ENCODE measurements at regions of chr1 and their contacts with region 1.

Region 1: GRCh38 chr1:161201828-161202725 is at the start of gene NDUFS2:
- DNase-seq: peak; percentile 71 to 98 (median 92)
- ATAC-seq: peak; percentile 99
- H3K4me3 ChIP-seq: peak within 1 kb of the TSS; percentile 78
- H3K4me3 Mint-ChIP-seq: peak within 1 kb of the TSS; percentile 90 to 98 (median 95)
- H3K27ac ChIP-seq: peak within 1 kb of the TSS; percentile 97
- H3K27ac Mint-ChIP-seq: peak within 1 kb of the TSS; percentile 96 to 99 (median 98)
- H3K4me1 ChIP-seq: peaks cover 35 to 60% of the 10 kb centered on the region in 2 donors
- H3K4me1 Mint-ChIP-seq: peaks cover 36 to 83% (median 66%) of the 10 kb centered on the region in 7 donors
- H3K27me3 ChIP-seq: no peaks in the 10 kb centered on the region
- H3K27me3 Mint-ChIP-seq: no peaks in the 10 kb centered on the region
- total RNA-seq, gene NDUFS2: 64.1 to 131 (median 85.3) TPM

Region 2: DNA sequence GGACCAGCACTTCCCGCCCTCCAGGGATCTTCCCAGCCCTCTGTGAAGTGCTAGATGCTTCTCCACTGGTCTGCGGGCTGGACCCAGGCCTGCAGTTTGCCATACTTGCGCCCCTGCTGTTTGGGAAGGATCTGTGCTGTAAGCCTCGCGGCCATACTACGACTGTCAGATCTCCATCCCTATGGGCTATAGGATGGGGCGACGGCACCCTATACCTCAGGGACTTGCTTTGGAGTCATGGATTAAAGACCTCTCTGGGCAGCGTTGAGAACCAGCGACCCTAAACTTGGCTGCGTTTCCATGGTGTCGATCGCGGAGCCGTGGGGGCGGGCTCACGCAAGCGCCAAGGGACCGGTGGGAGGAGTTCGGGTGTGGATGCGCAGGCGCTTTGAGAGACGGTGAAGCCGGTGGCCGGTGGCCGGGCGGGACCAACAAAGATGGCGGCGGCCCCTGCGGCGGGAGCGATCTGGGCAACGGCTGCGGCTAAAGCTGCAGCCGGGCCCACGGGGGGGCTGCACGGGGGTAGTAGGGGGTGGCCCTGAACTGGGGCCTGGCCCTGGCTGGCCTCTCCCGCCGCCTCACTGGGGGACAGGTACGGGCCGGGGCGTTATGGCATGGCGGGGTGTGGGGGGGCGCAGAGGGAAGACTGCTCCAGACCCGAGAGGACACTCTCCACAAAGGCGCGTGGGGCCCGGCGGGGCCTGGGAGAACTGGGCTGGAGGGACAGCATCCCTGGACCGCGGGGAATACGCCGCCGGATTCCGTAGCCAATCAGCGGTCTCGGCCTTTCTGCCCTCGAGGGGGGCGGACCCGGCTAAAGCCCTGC is 42.8 kb before region 1 on chr1 and contains the start of gene USP21:
- CTCF ChIA-PET with region 1: interaction called, 4 read pairs
- POLR2A ChIA-PET with region 1: interaction called, 69 read pairs
- intact Hi-C with region 1: loop called (anchors 2 kb)
- DNase-seq: peak; percentile 86 to 93 (median 91)
- ATAC-seq: peak; percentile 95
- H3K4me3 ChIP-seq: peak within 1 kb of the TSS; percentile 68
- H3K4me3 Mint-ChIP-seq: peak within 1 kb of the TSS; percentile 88 to 94 (median 92)
- H3K27ac ChIP-seq: peak within 1 kb of the TSS; percentile 84
- H3K27ac Mint-ChIP-seq: peak within 1 kb of the TSS; percentile 89 to 97 (median 93)
- H3K4me1 ChIP-seq: peaks cover 31 to 34% of the 10 kb centered on the region in 2 donors
- H3K4me1 Mint-ChIP-seq: peaks cover 35 to 76% (median 67%) of the 10 kb centered on the region in 7 donors
- H3K27me3 ChIP-seq: no peaks in the 10 kb centered on the region
- H3K27me3 Mint-ChIP-seq: no peaks in the 10 kb centered on the region
- total RNA-seq, gene USP21: 36.0 to 66.0 (median 38.6) TPM

Region 3: DNA sequence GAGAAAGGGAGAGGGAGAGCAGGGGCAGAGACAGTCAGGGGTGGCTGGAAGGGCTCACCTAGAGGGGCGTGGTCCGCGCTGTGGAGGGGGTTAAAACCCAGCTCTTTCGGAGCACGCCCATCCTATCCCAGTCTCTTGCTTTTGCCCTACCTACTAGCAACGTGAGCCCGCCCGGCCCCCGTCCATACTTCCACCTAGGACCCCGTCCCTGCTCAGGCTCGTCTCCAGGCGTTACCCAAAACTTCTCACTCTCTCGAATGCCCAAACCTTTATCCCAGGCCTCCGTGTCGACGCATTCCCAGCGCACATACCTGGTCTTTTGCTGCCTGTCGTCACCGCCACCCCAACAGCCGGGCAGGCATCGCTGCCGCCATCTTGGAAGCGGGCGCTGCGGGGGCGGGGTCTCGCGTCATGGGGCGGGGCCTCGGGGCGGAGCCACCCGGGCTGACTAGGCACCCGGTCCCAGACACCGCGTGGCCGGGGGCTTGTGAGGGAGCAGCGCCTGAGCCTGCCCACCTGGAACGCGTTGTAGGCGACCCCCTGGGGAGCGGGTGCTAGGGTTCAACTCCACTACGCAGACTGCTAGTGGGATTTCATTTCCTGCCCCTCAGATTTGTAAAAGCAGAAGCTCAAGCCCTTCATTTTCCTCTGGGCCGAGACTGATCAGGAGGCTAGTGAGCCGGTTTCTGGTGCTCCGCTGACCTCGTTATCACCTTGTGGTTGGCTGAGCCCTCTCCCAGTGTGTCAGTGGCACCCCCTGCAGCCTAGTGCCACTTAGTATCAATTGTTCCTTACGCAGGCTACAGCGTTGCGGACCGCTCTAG is 24.8 kb before region 1 on chr1 and contains the start of gene B4GALT3:
- CTCF ChIA-PET with region 1: interaction called, 35 read pairs
- POLR2A ChIA-PET with region 1: interaction called, 101 read pairs
- intact Hi-C with region 1: loop called in 1 of 2 experiments (anchors 1 kb)
- DNase-seq: peak; percentile 87 to 99 (median 92)
- ATAC-seq: peak; percentile 96
- H3K4me3 ChIP-seq: peak within 1 kb of the TSS; percentile 93
- H3K4me3 Mint-ChIP-seq: peak within 1 kb of the TSS; percentile 94 to 100 (median 98)
- H3K27ac ChIP-seq: peak within 1 kb of the TSS; percentile 93
- H3K27ac Mint-ChIP-seq: peak within 1 kb of the TSS; percentile 94 to 100 (median 97)
- H3K4me1 ChIP-seq: peaks cover 36 to 39% of the 10 kb centered on the region in 2 donors
- H3K4me1 Mint-ChIP-seq: peaks cover 54 to 87% (median 74%) of the 10 kb centered on the region in 7 donors
- H3K27me3 ChIP-seq: no peaks in the 10 kb centered on the region
- H3K27me3 Mint-ChIP-seq: no peaks in the 10 kb centered on the region
- total RNA-seq, gene B4GALT3: 40.5 to 83.7 (median 54.3) TPM

Region 4: GRCh38 chr1:161185282-161185682 is 16.8 kb before region 1 on chr1:
- CTCF ChIA-PET with region 1: interaction called, 35 read pairs
- POLR2A ChIA-PET with region 1: interaction called, 157 read pairs
- intact Hi-C with region 1: loop called (anchors 1 kb)
- DNase-seq: peak; percentile 38 to 92 (median 87)
- ATAC-seq: peak; percentile 88
- H3K4me3 ChIP-seq: peak overlapping the region; percentile 24
- H3K4me3 Mint-ChIP-seq: peak overlapping the region; percentile 76 to 89 (median 84)
- H3K27ac ChIP-seq: peak overlapping the region; percentile 65
- H3K27ac Mint-ChIP-seq: peak overlapping the region; percentile 92 to 99 (median 97)
- H3K4me1 ChIP-seq: peaks cover 74 to 79% of the 10 kb centered on the region in 2 donors
- H3K4me1 Mint-ChIP-seq: peaks cover 65 to 90% (median 80%) of the 10 kb centered on the region in 7 donors
- H3K27me3 ChIP-seq: no peaks in the 10 kb centered on the region
- H3K27me3 Mint-ChIP-seq: no peaks in the 10 kb centered on the region

Region 5: DNA sequence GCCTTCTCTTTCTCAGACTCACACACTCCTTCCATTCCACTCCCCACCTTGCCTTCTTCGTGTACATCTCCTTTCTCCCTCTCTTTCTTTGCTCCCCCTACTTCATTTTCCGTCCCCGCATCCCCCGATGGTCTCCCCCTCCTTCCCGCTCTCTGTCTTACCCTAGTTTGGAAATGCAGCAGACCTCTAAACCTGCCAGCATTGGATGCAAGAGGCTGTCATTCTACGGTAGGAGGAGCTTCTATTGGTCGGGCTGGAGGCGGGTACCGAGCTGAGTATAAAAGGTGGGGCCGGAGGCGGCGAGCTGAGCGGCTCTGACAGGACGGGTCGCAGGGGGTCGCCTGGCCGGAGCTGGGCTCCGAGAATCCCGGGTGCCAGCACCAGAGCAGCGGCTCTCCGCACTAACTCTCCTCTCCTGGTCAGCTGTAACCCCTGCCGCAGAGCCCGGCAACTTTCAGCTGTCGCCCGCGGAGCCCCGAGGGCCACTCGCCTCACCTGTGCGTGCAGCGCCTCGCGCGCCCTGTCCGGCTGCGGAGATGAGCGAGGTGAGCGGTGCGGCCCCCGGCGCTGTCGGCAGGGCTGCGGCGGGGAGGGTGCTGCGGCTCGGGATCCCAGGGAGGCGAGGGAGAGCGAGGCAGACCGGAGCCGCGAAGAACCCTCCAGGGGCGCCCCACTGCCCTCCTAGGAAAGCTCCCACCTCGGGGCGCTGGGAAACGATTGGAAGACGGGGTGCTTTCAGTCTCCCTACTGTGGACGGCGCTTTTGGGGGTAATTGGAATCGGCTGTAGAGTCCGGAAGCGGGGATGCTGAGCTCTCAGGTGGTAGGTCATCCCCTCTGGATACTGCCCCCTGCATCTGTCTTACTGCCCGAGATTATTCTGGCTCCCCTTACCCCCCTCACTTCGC is 56.6 kb after region 1 on chr1 and contains the start of gene PCP4L1:
- CTCF ChIA-PET with region 1: no interaction called
- POLR2A ChIA-PET with region 1: no interaction called
- intact Hi-C with region 1: no loop called
- DNase-seq: peak in 8 of 9 donors; percentile 5 to 38 (median 26)
- ATAC-seq: peak; percentile 68
- H3K4me3 ChIP-seq: peak within 1 kb of the TSS; percentile 43
- H3K4me3 Mint-ChIP-seq: peak within 1 kb of the TSS; percentile 60 to 93 (median 79)
- H3K27ac ChIP-seq: no peak within 1 kb of the TSS
- H3K27ac Mint-ChIP-seq: no peak within 1 kb of the TSS
- H3K4me1 ChIP-seq: peaks cover 0 to 4% of the 10 kb centered on the region in 2 donors
- H3K4me1 Mint-ChIP-seq: peaks cover 6 to 24% (median 19%) of the 10 kb centered on the region in 7 donors
- H3K27me3 ChIP-seq: peaks cover 0 to 13% of the 10 kb centered on the region in 2 donors
- H3K27me3 Mint-ChIP-seq: peaks cover 51 to 71% (median 60%) of the 10 kb centered on the region in 5 donors
- total RNA-seq, gene PCP4L1: not detected

Region 6: GRCh38 chr1:161305867-161306519 is 103.9 kb after region 1 on chr1:
- CTCF ChIA-PET with region 1: interaction called, 6 read pairs
- POLR2A ChIA-PET with region 1: interaction called, 15 read pairs
- intact Hi-C with region 1: no loop called
- DNase-seq: peak; percentile 67 to 94 (median 92)
- ATAC-seq: peak; percentile 99
- H3K4me3 ChIP-seq: peak overlapping the region; percentile 86
- H3K4me3 Mint-ChIP-seq: peak overlapping the region; percentile 93 to 100 (median 98)
- H3K27ac ChIP-seq: peak overlapping the region; percentile 78
- H3K27ac Mint-ChIP-seq: peak overlapping the region; percentile 91 to 98 (median 95)
- H3K4me1 ChIP-seq: peaks cover 16 to 19% of the 10 kb centered on the region in 2 donors
- H3K4me1 Mint-ChIP-seq: peaks cover 27 to 47% (median 41%) of the 10 kb centered on the region in 7 donors
- H3K27me3 ChIP-seq: no peaks in the 10 kb centered on the region
- H3K27me3 Mint-ChIP-seq: peaks cover 0 to 5% (median 0%) of the 10 kb centered on the region in 5 donors

Region 7: DNA sequence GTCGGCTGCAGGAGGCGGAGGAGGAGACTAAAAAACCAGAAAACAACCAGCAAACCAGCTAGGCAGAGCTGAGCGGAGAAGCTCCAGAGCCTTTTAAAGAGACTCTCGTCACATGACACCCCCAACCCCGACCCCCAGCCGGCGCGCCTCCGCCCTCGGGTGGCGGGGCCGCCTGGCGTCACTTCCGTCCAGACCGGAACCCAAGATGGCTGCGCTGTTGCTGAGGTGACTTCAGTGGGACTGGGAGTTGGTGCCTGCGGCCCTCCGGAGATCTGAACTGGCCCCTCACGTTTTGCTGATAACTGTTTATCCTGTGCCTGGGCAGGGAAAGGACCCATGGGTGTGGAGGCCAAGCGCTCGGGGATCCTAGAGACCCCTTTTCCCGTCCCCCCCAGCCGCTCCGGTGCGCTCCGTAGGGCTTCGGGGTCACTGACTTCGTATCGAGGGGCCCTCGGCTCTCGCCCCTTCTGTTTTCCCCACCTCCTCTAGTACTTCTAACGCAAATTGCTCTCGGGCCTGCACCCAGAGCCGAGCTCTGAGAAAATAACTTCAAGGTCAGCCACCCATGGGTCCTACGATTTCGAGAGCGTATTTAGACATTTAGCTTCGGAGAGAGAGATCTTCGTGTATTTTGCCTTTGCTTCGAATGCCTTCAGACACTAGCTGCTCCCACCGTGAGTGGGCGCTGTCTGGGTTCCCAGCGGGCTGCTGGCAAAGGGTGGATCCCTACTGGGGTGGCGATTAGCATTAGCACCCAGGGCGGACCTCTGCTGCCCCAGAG is 112.3 kb after region 1 on chr1 and contains the start of gene SDHC:
- CTCF ChIA-PET with region 1: no interaction called
- POLR2A ChIA-PET with region 1: interaction called, 21 read pairs
- intact Hi-C with region 1: loop called in 1 of 2 experiments (anchors 1 kb)
- DNase-seq: peak; percentile 83 to 95 (median 93)
- ATAC-seq: peak; percentile 99
- H3K4me3 ChIP-seq: peak within 1 kb of the TSS; percentile 72
- H3K4me3 Mint-ChIP-seq: peak within 1 kb of the TSS; percentile 91 to 99 (median 98)
- H3K27ac ChIP-seq: peak within 1 kb of the TSS; percentile 97
- H3K27ac Mint-ChIP-seq: peak within 1 kb of the TSS; percentile 98 to 100 (median 99)
- H3K4me1 ChIP-seq: peaks cover 0 to 15% of the 10 kb centered on the region in 2 donors
- H3K4me1 Mint-ChIP-seq: peaks cover 13 to 39% (median 31%) of the 10 kb centered on the region in 7 donors
- H3K27me3 ChIP-seq: no peaks in the 10 kb centered on the region
- H3K27me3 Mint-ChIP-seq: peaks cover 0 to 7% (median 0%) of the 10 kb centered on the region in 5 donors
- total RNA-seq, gene SDHC: 66.3 to 174 (median 106) TPM

Region 8: DNA sequence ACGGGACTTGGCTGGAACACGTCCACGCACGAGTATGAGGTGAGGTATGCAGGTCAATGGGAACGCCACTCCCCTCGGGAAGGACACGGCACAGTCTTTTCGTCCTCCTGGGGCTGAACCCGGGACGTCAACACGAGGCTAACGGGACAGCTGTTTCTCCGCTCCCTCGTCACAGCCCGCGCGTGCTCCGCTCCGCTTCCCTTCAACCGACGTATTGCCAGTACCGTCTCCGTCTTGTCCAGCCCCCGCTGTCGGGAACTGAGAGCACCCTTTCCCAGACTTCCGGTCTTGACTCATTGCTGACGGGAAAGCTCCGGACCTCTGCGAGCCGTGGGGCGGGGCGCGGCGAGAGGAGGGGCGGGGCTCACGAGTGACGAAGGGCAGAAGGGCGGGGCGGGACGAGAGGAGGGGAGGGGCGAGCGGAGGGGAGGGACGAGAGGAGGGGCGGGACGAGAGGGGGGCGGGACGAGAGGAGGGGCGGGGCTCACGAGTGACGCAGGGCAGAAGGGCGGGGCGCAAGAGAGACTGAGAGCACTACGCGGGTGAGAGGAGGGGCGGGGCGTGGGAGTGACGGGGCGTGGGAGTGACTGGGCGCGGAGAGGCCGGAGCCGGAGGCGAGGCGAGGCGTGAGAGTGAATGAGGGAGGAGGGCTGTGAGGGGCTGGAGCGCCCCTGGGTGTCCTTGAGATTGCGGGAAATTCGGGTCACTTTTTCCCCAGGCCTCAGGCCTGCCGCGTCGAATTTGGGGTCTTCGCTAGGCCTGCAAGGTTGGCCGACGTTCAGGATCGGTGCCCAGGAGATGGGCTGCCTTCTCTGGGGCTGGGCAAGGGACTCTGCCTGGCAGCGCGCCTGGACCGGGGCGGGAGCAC is 187.8 kb after region 1 on chr1:
- CTCF ChIA-PET with region 1: interaction called, 3 read pairs
- POLR2A ChIA-PET with region 1: interaction called, 17 read pairs
- intact Hi-C with region 1: no loop called
- DNase-seq: peak; percentile 85 to 96 (median 92)
- ATAC-seq: peak; percentile 97
- H3K4me3 ChIP-seq: peak overlapping the region; percentile 86
- H3K4me3 Mint-ChIP-seq: peak overlapping the region; percentile 88 to 95 (median 92)
- H3K27ac ChIP-seq: peak overlapping the region; percentile 93
- H3K27ac Mint-ChIP-seq: peak overlapping the region; percentile 93 to 99 (median 98)
- H3K4me1 ChIP-seq: peaks cover 3 to 4% of the 10 kb centered on the region in 2 donors
- H3K4me1 Mint-ChIP-seq: peaks cover 0 to 50% (median 28%) of the 10 kb centered on the region in 7 donors
- H3K27me3 ChIP-seq: no peaks in the 10 kb centered on the region
- H3K27me3 Mint-ChIP-seq: no peaks in the 10 kb centered on the region

Measured in naive thymus-derived CD4-positive, alpha-beta T cell (primary cell).